ENCODE measurements at regions of chr1 and their contacts with region 1.

Region 1: DNA sequence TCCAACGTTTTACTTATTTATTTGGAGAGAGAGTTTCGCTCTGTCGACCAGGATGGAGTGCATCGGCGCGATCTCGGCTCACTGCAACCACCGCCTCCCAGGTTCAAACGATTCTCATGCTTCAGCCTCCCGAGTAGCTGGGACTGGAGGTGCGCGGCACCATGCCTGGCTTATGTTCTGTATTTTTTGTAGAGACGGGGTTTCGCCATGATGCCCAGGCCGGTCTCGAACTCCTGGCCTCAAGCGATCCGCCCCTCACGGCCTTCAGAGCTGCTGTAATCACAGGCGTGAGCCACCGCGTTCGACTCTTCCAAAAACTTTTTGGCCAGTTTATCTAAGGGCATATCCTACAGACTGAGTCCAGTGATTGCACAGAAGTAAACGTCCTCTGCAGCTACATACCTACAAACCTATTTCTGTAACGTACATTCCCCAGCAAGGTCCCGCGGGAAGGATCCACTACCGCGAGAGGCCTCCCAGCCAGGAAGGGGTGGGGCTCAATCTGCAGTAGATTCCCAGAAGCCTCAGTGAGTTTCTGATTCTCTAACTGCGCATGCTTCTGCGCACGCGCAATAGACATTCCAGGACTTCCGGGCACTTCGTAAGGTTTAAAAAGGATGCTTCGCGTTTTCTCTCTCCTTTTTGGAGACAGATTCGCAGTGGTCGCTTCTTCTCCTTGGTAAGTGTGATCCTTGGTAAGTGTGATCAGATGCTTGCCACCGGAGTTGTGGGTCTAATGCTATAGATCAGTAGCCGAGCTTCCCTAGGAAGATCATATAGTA is at the start of gene RCC1:
- DNase-seq: peak; percentile 89 to 99 (median 94)
- ATAC-seq: peak; percentile 91
- H3K4me3 ChIP-seq: peak within 1 kb of the TSS; percentile 82 to 88
- H3K4me3 Mint-ChIP-seq: peak within 1 kb of the TSS; percentile 95
- H3K27ac ChIP-seq: peak within 1 kb of the TSS; percentile 77 to 85
- H3K27ac Mint-ChIP-seq: peak within 1 kb of the TSS; percentile 94
- H3K4me1 ChIP-seq: peaks cover 31% of the 10 kb centered on the region
- H3K4me1 Mint-ChIP-seq: peaks cover 45% of the 10 kb centered on the region
- H3K27me3 ChIP-seq: no peaks in the 10 kb centered on the region
- H3K27me3 Mint-ChIP-seq: no peaks in the 10 kb centered on the region
- CTCF ChIP-seq: no peak
- total RNA-seq, gene RCC1: 12.5 to 14.4 TPM

Region 2: DNA sequence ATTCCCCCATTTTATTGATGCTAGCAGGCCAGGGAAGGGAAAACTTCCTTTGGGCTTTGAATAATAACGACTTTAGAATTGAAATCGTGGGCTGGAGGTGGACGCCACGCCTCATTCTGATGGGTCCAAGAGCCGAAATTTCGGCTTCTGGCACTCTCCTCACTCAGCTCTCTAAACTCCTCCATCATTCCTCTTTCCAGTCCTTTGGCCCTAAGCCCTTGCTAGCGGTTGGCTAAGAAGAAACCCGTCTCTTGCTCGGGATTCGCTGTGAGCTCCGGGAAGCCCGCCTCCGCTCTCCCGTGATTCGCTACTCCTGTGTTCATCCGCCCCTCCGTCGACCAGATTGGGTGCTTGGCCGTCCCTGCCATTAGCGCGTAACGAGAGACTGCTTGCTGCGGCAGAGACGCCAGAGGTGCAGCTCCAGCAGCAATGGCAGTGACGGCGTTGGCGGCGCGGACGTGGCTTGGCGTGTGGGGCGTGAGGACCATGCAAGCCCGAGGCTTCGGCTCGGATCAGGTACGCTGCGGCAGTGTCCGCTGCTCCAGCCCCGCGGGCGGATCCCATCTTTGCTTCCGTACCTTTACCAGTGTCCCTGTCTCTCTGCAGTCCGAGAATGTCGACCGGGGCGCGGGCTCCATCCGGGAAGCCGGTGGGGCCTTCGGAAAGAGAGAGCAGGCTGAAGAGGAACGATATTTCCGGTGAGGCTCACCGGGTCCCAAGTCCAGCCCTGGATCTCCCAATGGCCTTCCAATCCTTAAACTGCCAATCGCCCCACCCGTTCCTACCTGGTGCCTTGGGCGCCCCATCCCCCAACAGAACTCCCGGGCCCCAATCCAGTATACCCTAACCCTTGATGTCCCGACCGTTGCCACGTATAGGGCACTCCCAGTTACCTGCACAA is 269.6 kb before region 1 on chr1 and contains the start of gene ATP5IF1:
- CTCF ChIA-PET with region 1: no interaction called
- POLR2A ChIA-PET with region 1: interaction called, 3 read pairs
- intact Hi-C with region 1: loop called in 1 of 2 experiments (anchors 2 kb)
- DNase-seq: peak; percentile 90 to 98 (median 94)
- ATAC-seq: peak; percentile 95
- H3K4me3 ChIP-seq: peak within 1 kb of the TSS; percentile 80 to 96
- H3K4me3 Mint-ChIP-seq: no peak within 1 kb of the TSS
- H3K27ac ChIP-seq: peak within 1 kb of the TSS; percentile 84 to 96
- H3K27ac Mint-ChIP-seq: no peak within 1 kb of the TSS
- H3K4me1 ChIP-seq: peaks cover 41% of the 10 kb centered on the region
- H3K4me1 Mint-ChIP-seq: peaks cover 21% of the 10 kb centered on the region
- H3K27me3 ChIP-seq: no peaks in the 10 kb centered on the region
- H3K27me3 Mint-ChIP-seq: no peaks in the 10 kb centered on the region
- CTCF ChIP-seq: no peak
- total RNA-seq, gene ATP5IF1: 66.1 to 69.3 TPM

Region 3: DNA sequence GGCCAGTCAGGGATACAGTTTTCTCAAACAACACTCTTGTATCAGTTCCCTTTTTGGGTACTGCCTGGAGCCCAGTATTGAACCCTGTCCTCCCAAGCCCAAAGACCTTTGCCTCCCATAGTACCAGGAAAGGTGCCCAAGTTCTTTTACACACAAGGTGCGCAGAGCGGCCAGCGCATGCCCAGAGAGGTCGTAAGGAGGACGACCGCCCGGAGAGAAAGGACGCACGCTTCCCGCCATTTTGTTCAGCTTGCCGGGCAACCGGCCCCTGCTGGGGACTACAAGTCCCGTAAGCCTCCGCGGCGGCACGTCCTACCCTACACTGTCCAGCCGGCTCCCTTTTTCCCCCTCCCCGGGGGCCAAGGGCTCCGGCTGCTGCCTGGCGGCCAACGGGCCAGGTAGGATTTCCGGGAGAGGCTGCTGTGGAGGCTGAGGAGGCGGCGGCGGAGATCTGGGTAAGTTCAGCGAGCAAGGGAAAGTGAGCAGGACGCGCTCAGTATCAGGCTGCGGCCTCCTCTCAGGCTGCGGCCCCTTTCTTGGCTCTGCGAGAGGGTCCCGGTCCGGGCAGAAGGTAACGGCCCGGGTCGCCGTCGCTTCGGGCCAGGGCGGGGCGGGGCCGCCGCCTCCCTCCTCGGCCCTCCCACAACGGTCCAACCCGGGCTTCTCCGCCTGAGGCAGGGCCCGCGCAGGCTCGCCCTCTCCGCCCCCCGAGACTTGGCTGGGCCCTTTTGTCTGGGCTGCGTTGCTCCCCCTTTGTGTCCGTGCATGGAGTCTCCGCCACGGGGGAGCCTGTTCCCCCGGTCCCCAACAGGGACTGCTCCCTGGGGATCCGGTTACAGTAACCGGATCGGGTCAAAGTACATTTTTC is 136.0 kb before region 1 on chr1 and contains the start of gene PHACTR4:
- CTCF ChIA-PET with region 1: no interaction called
- POLR2A ChIA-PET with region 1: no interaction called
- intact Hi-C with region 1: loop called (anchors 2 to 5 kb)
- DNase-seq: peak; percentile 44 to 87 (median 76)
- ATAC-seq: peak; percentile 88
- H3K4me3 ChIP-seq: peak within 1 kb of the TSS; percentile 70 to 90
- H3K4me3 Mint-ChIP-seq: peak within 1 kb of the TSS; percentile 96
- H3K27ac ChIP-seq: peak within 1 kb of the TSS; percentile 67 to 83
- H3K27ac Mint-ChIP-seq: peak within 1 kb of the TSS; percentile 94
- H3K4me1 ChIP-seq: peaks cover 5% of the 10 kb centered on the region
- H3K4me1 Mint-ChIP-seq: peaks cover 34% of the 10 kb centered on the region
- H3K27me3 ChIP-seq: no peaks in the 10 kb centered on the region
- H3K27me3 Mint-ChIP-seq: no peaks in the 10 kb centered on the region
- CTCF ChIP-seq: peak; percentile 30
- total RNA-seq, gene PHACTR4: 19.3 to 25.2 TPM

Region 4: GRCh38 chr1:28552758-28553663 is 47.4 kb after region 1 on chr1 and contains the start of gene TRNAU1AP:
- CTCF ChIA-PET with region 1: no interaction called
- POLR2A ChIA-PET with region 1: no interaction called
- intact Hi-C with region 1: loop called (anchors 1 kb)
- DNase-seq: peak; percentile 95 to 98 (median 97)
- ATAC-seq: peak; percentile 96
- H3K4me3 ChIP-seq: peak within 1 kb of the TSS; percentile 91 to 98
- H3K4me3 Mint-ChIP-seq: peak within 1 kb of the TSS; percentile 99
- H3K27ac ChIP-seq: peak within 1 kb of the TSS; percentile 77 to 86
- H3K27ac Mint-ChIP-seq: peak within 1 kb of the TSS; percentile 99
- H3K4me1 ChIP-seq: peaks cover 15% of the 10 kb centered on the region
- H3K4me1 Mint-ChIP-seq: peaks cover 24% of the 10 kb centered on the region
- H3K27me3 ChIP-seq: no peaks in the 10 kb centered on the region
- H3K27me3 Mint-ChIP-seq: no peaks in the 10 kb centered on the region
- CTCF ChIP-seq: no peak
- total RNA-seq, gene TRNAU1AP: 20.5 to 25.7 TPM